MCF 10A (cell line): ENCODE measurements at regions of chr15 and their contacts with region 1.

Region 1: GRCh38 chr15:41180206-41180789 is 50.3 kb downstream of the EXD1 start:
- DNase-seq: no peak
- H3K4me3 Mint-ChIP-seq: no peak overlapping the region
- H3K27ac Mint-ChIP-seq: no peak overlapping the region
- H3K4me1 Mint-ChIP-seq: no peaks in the 10 kb centered on the region
- H3K27me3 Mint-ChIP-seq: no peaks in the 10 kb centered on the region
- CTCF ChIP-seq: no peak

Region 2: DNA sequence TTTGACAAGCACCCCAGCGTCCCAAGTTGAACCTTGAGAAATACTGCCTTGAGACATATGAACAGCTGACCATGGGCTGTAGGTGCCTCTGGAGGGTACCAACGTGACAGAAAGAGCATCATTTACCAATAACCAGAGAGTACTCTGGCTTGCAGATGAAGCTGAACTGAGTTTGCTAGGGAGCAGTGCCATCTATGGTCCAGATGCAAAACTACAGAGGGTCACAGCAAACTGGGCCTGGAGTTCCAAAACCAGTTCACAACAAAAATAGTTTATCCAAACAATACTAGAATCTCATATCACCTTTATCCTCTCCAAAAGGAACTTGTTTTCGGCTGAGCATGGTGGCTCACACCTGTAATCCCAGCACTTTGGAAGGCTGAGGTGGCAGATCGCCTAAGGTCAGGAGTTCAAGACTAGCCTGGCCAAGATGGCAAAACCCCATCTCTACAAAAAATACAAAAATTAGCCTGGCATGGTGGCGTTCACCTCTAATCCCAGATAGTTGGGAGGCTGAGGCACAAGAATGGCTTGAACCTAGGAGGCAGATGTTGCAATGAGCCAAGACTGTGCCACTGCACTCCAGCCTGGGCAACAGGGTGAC is 157.7 kb before region 1 on chr15:
- CTCF ChIA-PET with region 1: interaction called, 12 read pairs
- POLR2A ChIA-PET with region 1: interaction called, 4 read pairs
- intact Hi-C with region 1: no loop called
- DNase-seq: peak; percentile 48
- H3K4me3 Mint-ChIP-seq: no peak overlapping the region
- H3K27ac Mint-ChIP-seq: no peak overlapping the region
- H3K4me1 Mint-ChIP-seq: peaks cover 5% of the 10 kb centered on the region
- H3K27me3 Mint-ChIP-seq: no peaks in the 10 kb centered on the region
- CTCF ChIP-seq: peak; percentile 55

Region 3: DNA sequence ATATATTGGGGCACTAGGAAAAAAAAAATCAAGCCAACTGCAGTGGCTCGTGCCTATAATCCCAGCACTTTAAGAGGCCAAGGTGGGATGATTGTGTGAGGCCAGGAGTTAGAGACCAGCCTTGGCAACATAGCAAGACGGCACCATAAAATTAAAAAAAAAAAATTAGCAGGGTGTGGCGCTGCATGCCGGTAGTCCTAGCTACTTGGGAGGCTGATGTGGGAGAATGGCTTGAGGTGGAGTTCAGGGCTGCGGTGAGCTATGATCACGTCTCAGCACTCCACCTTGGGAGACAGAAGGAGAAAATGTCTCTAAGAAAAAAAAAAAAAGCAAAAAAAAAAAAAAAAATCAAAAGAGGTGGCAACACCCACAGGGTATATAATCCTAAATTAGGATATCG is 113.8 kb before region 1 on chr15:
- CTCF ChIA-PET with region 1: interaction called, 10 read pairs
- POLR2A ChIA-PET with region 1: no interaction called
- intact Hi-C with region 1: no loop called
- DNase-seq: no peak
- H3K4me3 Mint-ChIP-seq: no peak overlapping the region
- H3K27ac Mint-ChIP-seq: no peak overlapping the region
- H3K4me1 Mint-ChIP-seq: no peaks in the 10 kb centered on the region
- H3K27me3 Mint-ChIP-seq: no peaks in the 10 kb centered on the region
- CTCF ChIP-seq: no peak

Region 4: GRCh38 chr15:41150279-41150678 is 30.0 kb before region 1 on chr15:
- CTCF ChIA-PET with region 1: no interaction called
- POLR2A ChIA-PET with region 1: no interaction called
- intact Hi-C with region 1: no loop called
- DNase-seq: no peak
- H3K4me3 Mint-ChIP-seq: no peak overlapping the region
- H3K27ac Mint-ChIP-seq: no peak overlapping the region
- H3K4me1 Mint-ChIP-seq: no peaks in the 10 kb centered on the region
- H3K27me3 Mint-ChIP-seq: no peaks in the 10 kb centered on the region
- CTCF ChIP-seq: no peak